ENCODE measurements at regions of chr11 and their contacts with region 1.

Region 1: DNA sequence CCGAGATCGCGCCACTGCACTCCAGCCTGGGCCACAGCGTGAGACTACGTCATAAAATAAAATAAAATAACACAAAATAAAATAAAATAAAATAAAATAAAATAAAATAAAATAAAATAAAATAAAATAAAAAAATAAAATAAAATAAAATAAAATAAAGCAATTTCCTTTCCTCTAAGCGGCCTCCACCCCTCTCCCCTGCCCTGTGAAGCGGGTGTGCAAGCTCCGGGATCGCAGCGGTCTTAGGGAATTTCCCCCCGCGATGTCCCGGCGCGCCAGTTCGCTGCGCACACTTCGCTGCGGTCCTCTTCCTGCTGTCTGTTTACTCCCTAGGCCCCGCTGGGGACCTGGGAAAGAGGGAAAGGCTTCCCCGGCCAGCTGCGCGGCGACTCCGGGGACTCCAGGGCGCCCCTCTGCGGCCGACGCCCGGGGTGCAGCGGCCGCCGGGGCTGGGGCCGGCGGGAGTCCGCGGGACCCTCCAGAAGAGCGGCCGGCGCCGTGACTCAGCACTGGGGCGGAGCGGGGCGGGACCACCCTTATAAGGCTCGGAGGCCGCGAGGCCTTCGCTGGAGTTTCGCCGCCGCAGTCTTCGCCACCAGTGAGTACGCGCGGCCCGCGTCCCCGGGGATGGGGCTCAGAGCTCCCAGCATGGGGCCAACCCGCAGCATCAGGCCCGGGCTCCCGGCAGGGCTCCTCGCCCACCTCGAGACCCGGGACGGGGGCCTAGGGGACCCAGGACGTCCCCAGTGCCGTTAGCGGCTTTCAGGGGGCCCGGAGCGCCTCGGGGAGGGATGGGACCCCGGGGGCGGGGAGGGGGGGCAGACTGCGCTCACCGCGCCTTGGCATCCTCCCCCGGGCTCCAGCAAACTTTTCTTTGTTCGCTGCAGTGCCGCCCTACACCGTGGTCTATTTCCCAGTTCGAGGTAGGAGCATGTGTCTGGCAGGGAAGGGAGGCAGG is at the start of gene GSTP1:
- DNase-seq: peak; percentile 89
- ATAC-seq: peak; percentile 91
- H3K4me3 Mint-ChIP-seq: peak within 1 kb of the TSS; percentile 86
- H3K27ac Mint-ChIP-seq: peak within 1 kb of the TSS; percentile 89
- H3K4me1 Mint-ChIP-seq: peaks cover 42% of the 10 kb centered on the region
- H3K27me3 Mint-ChIP-seq: peaks cover 7% of the 10 kb centered on the region
- CTCF ChIP-seq: peak; percentile 71
- total RNA-seq, gene GSTP1: 467 to 472 TPM

Region 2: DNA sequence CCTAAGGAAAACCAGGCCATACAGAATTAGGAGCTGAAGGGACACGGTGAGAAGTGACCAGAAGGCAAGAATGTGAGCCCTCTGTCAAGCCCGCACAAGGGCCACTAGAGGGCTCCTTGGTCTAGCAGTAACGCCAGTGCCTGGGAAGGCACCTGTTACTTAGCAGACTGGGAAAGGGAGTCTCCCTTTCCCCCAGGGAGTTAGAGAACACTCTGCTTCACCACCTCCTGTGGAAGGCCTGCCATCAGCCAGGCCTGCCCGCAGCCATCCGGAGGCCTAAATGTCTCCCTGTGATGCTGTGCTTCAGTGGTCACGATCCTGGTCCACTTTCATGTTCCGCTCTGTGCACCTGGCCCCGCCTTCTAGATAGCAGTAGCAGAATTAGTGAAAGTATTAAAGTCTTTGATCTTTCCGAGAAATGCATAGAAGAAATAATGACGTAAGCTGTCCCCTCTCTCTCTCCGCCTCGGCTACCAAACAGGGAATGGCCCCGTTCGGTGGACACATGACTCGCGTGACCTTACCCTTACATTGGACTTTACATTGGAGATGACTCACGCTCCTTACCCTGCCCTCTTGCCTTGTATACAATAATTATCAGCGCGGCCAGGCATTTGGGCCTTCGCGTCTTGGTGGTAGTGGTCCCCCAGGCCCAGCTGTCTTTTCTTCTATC is 10.6 kb before region 1 on chr11:
- CTCF ChIA-PET with region 1: interaction called, 18 read pairs
- POLR2A ChIA-PET with region 1: no interaction called
- intact Hi-C with region 1: no loop called
- DNase-seq: peak; percentile 51
- ATAC-seq: no peak
- H3K4me3 Mint-ChIP-seq: no peak overlapping the region
- H3K27ac Mint-ChIP-seq: no peak overlapping the region
- H3K4me1 Mint-ChIP-seq: no peaks in the 10 kb centered on the region
- H3K27me3 Mint-ChIP-seq: peaks cover 8% of the 10 kb centered on the region
- CTCF ChIP-seq: peak; percentile 73

Region 3: GRCh38 chr11:67613960-67614715 is 30.6 kb after region 1 on chr11:
- CTCF ChIA-PET with region 1: interaction called, 12 read pairs
- POLR2A ChIA-PET with region 1: interaction called, 4 read pairs
- intact Hi-C with region 1: no loop called
- DNase-seq: peak; percentile 93
- ATAC-seq: peak; percentile 82
- H3K4me3 Mint-ChIP-seq: peak overlapping the region; percentile 77
- H3K27ac Mint-ChIP-seq: peak overlapping the region; percentile 99
- H3K4me1 Mint-ChIP-seq: peaks cover 26% of the 10 kb centered on the region
- H3K27me3 Mint-ChIP-seq: no peaks in the 10 kb centered on the region
- CTCF ChIP-seq: peak; percentile 61